ENCODE measurements at regions of chr2 and their contacts with region 1.

Region 1: GRCh38 chr2:134391751-134392160 is 137.9 kb downstream of the MGAT5 start:
- DNase-seq: no peak
- H3K4me3 ChIP-seq: no peak overlapping the region
- H3K27ac ChIP-seq: no peak overlapping the region
- H3K4me1 ChIP-seq: no peaks in the 10 kb centered on the region
- H3K27me3 ChIP-seq: no peaks in the 10 kb centered on the region
- CTCF ChIP-seq: no peak
- EP300 ChIP-seq: no peak
- POLR2A ChIP-seq: no peak
- RAD21 ChIP-seq: no peak

Region 2: DNA sequence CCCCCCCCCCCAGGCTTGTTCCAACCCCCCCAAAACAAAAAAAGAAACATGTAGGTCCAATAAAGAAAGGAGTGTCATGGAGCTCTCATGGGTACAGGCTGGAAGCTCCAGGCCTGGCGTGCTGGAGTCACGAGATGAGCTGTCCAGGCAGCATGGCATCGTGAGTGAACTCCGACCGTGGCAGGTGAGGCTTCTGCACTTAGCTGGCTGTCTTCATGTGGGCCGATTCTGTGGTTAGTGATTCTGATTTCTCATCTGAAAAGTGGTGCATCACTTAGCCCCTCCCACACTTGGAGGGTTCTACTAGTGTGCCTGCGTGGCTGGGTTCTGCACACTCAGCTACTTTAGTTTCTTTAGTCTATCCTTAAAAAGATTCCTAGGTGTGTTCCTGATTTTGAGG is 264.3 kb before region 1 on chr2:
- CTCF ChIA-PET with region 1: no interaction called
- POLR2A ChIA-PET with region 1: no interaction called
- DNase-seq: no peak
- H3K4me3 ChIP-seq: no peak overlapping the region
- H3K27ac ChIP-seq: no peak overlapping the region
- H3K4me1 ChIP-seq: peaks cover 4 to 17% (median 8%) of the 10 kb centered on the region in 4 experiments; a peak in 4 of 7 replicates
- H3K27me3 ChIP-seq: no peaks in the 10 kb centered on the region; a peak in 1 of 7 replicates
- CTCF ChIP-seq: no peak
- EP300 ChIP-seq: no peak
- POLR2A ChIP-seq: no peak
- RAD21 ChIP-seq: no peak

Region 3: DNA sequence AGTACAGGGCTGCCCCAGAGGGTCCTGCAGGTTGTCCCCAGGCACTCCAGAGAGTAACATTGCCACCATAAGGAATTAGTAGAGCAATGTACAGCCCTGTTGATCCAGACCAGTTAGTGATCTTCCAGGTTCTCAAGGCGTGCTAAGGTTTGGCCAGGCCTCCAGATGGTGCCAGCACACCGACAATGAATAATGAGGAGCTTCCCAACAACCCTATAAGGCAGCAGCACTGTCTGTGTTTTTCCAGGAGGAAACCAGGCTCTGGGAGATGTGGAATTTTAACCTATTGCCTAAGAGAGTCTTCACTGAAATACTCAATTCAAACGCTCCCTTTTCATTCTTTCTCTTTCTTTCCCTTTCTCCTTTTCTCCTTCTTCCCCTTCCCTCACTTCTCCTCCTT is 15.8 kb before region 1 on chr2:
- CTCF ChIA-PET with region 1: interaction called, 15 read pairs
- POLR2A ChIA-PET with region 1: no interaction called
- DNase-seq: no peak
- H3K4me3 ChIP-seq: no peak overlapping the region
- H3K27ac ChIP-seq: no peak overlapping the region
- H3K4me1 ChIP-seq: no peaks in the 10 kb centered on the region
- H3K27me3 ChIP-seq: no peaks in the 10 kb centered on the region
- CTCF ChIP-seq: peak in 2 of 3 experiments; percentile 23 to 36; a peak in 3 of 4 replicates
- EP300 ChIP-seq: no peak
- POLR2A ChIP-seq: no peak
- RAD21 ChIP-seq: peak; percentile 34 to 47